ENCODE measurements at regions of chr17 and their contacts with region 1.

Region 1: GRCh38 chr17:29116804-29117772 is 63.1 kb downstream of the MYO18A start:
- DNase-seq: peak; percentile 93
- ATAC-seq: peak; percentile 72
- H3K4me3 Mint-ChIP-seq: no peak overlapping the region
- H3K27ac Mint-ChIP-seq: no peak overlapping the region
- H3K4me1 Mint-ChIP-seq: peaks cover 9% of the 10 kb centered on the region
- H3K27me3 Mint-ChIP-seq: no peaks in the 10 kb centered on the region
- CTCF ChIP-seq: peak; percentile 98

Region 2: GRCh38 chr17:28937044-28937729 is 179.9 kb before region 1 on chr17:
- CTCF ChIA-PET with region 1: interaction called, 13 read pairs
- POLR2A ChIA-PET with region 1: no interaction called
- DNase-seq: no peak
- ATAC-seq: no peak
- H3K4me3 Mint-ChIP-seq: no peak overlapping the region
- H3K27ac Mint-ChIP-seq: peak overlapping the region; percentile 98
- H3K4me1 Mint-ChIP-seq: peaks cover 58% of the 10 kb centered on the region
- H3K27me3 Mint-ChIP-seq: no peaks in the 10 kb centered on the region
- CTCF ChIP-seq: no peak

Region 3: GRCh38 chr17:28982131-28982951 is 134.7 kb before region 1 on chr17:
- CTCF ChIA-PET with region 1: interaction called, 36 read pairs
- POLR2A ChIA-PET with region 1: no interaction called
- DNase-seq: no peak
- ATAC-seq: no peak
- H3K4me3 Mint-ChIP-seq: no peak overlapping the region
- H3K27ac Mint-ChIP-seq: no peak overlapping the region
- H3K4me1 Mint-ChIP-seq: peaks cover 36% of the 10 kb centered on the region
- H3K27me3 Mint-ChIP-seq: peaks cover 54% of the 10 kb centered on the region
- CTCF ChIP-seq: no peak

Region 4: GRCh38 chr17:29042679-29043538 is 74.2 kb before region 1 on chr17 and contains the start of gene PIPOX:
- CTCF ChIA-PET with region 1: interaction called, 42 read pairs
- POLR2A ChIA-PET with region 1: no interaction called
- DNase-seq: peak; percentile 80
- ATAC-seq: peak; percentile 87
- H3K4me3 Mint-ChIP-seq: peak within 1 kb of the TSS; percentile 41
- H3K27ac Mint-ChIP-seq: peak within 1 kb of the TSS; percentile 98
- H3K4me1 Mint-ChIP-seq: peaks cover 63% of the 10 kb centered on the region
- H3K27me3 Mint-ChIP-seq: no peaks in the 10 kb centered on the region
- CTCF ChIP-seq: no peak
- total RNA-seq, gene PIPOX: 32.4 to 34.2 TPM (median 34.1 TPM) in 3 replicates

Region 5: GRCh38 chr17:29078183-29079045 is 38.7 kb before region 1 on chr17:
- CTCF ChIA-PET with region 1: interaction called, 34 read pairs
- POLR2A ChIA-PET with region 1: no interaction called
- DNase-seq: no peak
- ATAC-seq: no peak
- H3K4me3 Mint-ChIP-seq: no peak overlapping the region
- H3K27ac Mint-ChIP-seq: no peak overlapping the region
- H3K4me1 Mint-ChIP-seq: peaks cover 30% of the 10 kb centered on the region
- H3K27me3 Mint-ChIP-seq: no peaks in the 10 kb centered on the region
- CTCF ChIP-seq: no peak

Region 6: DNA sequence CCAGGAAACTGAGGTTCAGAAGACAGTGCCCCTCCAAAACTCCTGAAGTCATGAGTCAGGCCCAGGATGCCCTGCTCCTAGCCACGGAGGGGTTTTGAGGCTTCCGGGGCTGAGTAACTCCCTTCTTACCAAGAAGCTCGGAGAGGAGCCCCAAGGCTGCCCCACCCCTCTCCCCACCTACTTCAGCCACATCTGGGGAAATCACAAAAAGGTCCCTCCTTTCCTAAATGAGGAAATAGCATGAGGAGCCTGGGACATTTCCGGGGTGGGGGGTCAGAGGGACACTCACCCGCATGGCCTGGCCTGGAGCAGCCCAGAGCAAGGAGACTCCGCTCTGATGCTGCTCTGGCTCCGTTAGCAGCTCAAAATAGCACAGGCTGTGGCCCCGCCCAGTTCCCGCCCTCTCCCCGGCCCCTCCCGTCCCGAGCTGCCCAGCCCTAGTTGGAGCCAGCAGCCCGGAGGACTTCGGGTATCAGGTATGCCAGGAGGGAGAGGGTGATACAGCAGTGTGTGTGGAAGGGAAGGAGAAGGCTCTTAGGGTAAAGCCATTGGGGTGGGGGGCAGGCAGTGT is 23.0 kb after region 1 on chr17:
- CTCF ChIA-PET with region 1: interaction called, 269 read pairs
- POLR2A ChIA-PET with region 1: no interaction called
- DNase-seq: peak; percentile 83
- ATAC-seq: peak; percentile 88
- H3K4me3 Mint-ChIP-seq: no peak overlapping the region
- H3K27ac Mint-ChIP-seq: peak overlapping the region; percentile 69; the same call in 1 of the 2 replicates
- H3K4me1 Mint-ChIP-seq: peaks cover 34% of the 10 kb centered on the region
- H3K27me3 Mint-ChIP-seq: no peaks in the 10 kb centered on the region
- CTCF ChIP-seq: no peak

Region 7: GRCh38 chr17:29241015-29241963 is 124.2 kb after region 1 on chr17:
- CTCF ChIA-PET with region 1: interaction called, 28 read pairs
- POLR2A ChIA-PET with region 1: no interaction called
- DNase-seq: peak; percentile 24
- ATAC-seq: peak; percentile 79
- H3K4me3 Mint-ChIP-seq: no peak overlapping the region
- H3K27ac Mint-ChIP-seq: peak overlapping the region; percentile 35; the same call in 1 of the 2 replicates
- H3K4me1 Mint-ChIP-seq: peaks cover 27% of the 10 kb centered on the region
- H3K27me3 Mint-ChIP-seq: no peaks in the 10 kb centered on the region
- CTCF ChIP-seq: no peak